Spleen (tissue), 13 donors: ENCODE measurements at regions of chr7 and their contacts with region 1.

Region 1: DNA sequence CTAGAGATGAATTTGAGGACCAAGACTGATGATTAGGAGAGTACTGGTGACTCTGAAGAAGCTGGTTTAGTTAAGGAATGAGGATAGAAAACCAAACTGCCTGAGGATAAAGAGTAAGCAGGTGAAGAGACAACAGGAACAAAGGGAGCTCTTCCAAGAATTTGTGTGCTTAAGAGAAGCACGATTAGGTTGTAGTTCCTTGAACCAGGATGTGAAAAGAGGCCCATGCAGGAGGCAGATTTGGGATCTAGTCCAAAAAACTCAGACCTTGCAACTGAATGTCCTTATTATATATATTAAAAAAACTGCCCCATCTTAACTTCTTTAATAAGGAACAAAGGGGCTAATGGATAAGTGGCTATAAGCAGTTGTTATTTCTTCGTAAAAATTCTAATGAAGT is 150.4 kb downstream of the SKAP2 start:
- DNase-seq: no peak
- H3K4me3 ChIP-seq: no peak overlapping the region
- H3K27ac ChIP-seq: no peak overlapping the region
- H3K4me1 ChIP-seq: no peaks in the 10 kb centered on the region
- H3K27me3 ChIP-seq: no peaks in the 10 kb centered on the region
- CTCF ChIP-seq: no peak
- POLR2A ChIP-seq: no peak

Region 2: DNA sequence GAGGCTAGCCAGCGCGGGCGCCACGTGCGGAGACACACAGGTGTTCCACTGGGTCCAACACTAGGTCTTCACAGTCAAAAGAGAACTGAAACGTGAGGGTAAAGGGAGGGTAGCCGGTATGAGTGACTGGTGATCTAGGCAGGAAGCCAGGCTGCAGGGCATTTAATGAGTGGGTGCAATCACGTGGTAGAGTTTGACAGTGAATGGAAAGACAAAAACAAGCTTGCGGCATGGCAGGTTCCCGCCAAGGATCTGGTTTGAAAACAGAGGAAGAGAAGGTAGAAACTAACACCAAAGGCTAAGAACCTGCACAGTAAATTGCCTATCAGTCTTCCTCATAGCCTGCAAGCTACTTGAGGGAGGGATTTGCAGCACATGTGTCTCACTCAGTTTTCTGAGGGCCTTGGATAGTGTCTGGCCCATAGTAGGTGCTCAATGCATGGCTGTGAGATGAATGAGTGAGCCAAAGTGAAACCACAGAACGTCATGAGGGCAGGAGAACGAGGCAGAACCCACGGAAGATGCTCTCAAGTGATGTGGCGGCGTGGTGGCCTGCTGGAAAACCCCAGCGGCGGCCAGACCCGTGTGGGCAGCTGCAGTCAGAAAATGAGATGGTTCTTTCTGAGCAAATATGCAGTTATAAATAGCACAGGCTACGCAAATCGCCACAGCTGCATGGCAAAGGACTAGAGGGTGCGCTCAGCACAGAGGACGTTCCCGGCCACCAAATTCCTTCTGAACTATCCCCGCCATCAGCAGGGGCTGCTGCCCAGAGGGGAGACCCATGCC is 745.6 kb before region 1 on chr7:
- intact Hi-C with region 1: no loop called
- DNase-seq: peak; percentile 84
- H3K4me3 ChIP-seq: peak overlapping the region in 1 of 8 donors; percentile 55
- H3K27ac ChIP-seq: peak overlapping the region in 4 of 8 donors; percentile 8 to 71 (median 58)
- H3K4me1 ChIP-seq: peaks cover 0 to 33% (median 7%) of the 10 kb centered on the region in 6 donors
- H3K27me3 ChIP-seq: peaks cover 0 to 64% (median 0%) of the 10 kb centered on the region in 7 donors
- CTCF ChIP-seq: no peak
- POLR2A ChIP-seq: no peak

Region 3: DNA sequence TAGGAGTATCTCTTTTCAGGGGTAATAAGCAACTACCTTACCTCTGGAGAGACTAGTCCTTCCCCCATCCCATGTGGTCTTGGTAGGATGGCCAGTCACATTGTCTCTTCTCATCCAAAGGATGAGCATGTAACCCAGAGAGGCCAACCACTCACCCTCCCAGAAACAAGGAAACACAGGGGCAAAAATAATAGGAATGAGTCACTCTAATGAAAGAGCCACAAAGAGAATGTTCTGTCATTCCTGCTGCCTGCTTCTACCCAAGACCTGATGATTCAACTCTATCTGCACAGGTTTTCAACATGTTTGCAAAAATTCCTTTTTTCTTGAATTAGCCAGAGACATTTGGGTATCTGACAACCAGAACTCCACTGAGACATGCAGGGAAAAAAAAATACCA is 661.3 kb before region 1 on chr7:
- intact Hi-C with region 1: no loop called
- DNase-seq: no peak
- H3K4me3 ChIP-seq: no peak overlapping the region
- H3K27ac ChIP-seq: no peak overlapping the region
- H3K4me1 ChIP-seq: no peaks in the 10 kb centered on the region
- H3K27me3 ChIP-seq: peaks cover 0 to 29% (median 0%) of the 10 kb centered on the region in 7 donors
- CTCF ChIP-seq: no peak
- POLR2A ChIP-seq: no peak

Region 4: GRCh38 chr7:26815426-26815825 is 101.4 kb after region 1 on chr7:
- intact Hi-C with region 1: loop called (anchors 10 kb)
- DNase-seq: no peak
- H3K4me3 ChIP-seq: no peak overlapping the region
- H3K27ac ChIP-seq: no peak overlapping the region
- H3K4me1 ChIP-seq: no peaks in the 10 kb centered on the region
- H3K27me3 ChIP-seq: no peaks in the 10 kb centered on the region
- CTCF ChIP-seq: no peak
- POLR2A ChIP-seq: no peak

Region 5: DNA sequence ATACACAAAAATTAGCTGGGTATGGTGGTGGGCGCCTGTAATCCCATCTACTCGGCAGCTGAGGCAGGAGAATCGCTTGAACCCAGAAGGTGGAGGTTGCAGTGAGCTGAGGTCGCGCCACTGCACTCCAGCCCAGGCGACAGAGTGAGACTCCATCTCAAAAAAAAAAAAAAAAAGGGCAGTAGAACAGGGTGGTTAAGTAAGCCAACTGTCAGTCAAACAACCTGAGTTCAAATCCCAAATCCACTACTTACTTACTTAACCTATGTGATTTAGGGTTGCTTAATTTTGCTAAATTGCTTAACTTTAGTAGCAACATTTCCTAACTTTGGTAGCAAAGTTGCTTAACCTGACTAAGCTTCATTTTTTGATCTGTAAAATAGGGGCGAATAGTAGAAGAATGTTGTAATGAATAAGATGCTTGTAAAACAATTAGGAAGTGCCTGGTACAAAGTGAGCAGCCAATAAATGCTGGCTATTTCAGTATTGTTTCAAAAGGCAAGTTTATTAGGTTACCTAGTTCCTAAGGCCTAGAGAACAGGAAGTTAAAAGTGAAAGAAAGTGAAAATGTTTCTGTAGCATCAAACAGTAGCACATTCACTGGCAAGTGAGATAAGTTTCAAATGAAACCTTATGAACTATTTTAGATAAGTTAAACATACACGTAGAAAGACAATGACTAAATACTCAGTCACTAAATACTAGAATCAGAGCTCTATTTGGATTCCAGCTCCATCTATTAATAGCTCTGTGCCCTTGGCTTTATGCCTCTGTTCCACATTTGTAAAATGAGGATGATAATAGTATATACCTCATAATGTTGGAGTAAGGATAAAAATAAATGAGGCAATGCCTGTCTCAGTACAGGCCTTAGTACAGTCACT is 317.5 kb after region 1 on chr7:
- intact Hi-C with region 1: no loop called
- DNase-seq: no peak
- H3K4me3 ChIP-seq: peak overlapping the region in 1 of 8 donors; percentile 14
- H3K27ac ChIP-seq: peak overlapping the region; percentile 3 to 80 (median 58)
- H3K4me1 ChIP-seq: peaks cover 6 to 19% (median 12%) of the 10 kb centered on the region in 6 donors
- H3K27me3 ChIP-seq: no peaks in the 10 kb centered on the region
- CTCF ChIP-seq: no peak
- POLR2A ChIP-seq: no peak